ENCODE measurements at regions of chr2 and their contacts with region 1.

Region 1: GRCh38 chr2:65554765-65555591 is 122.6 kb upstream of the SPRED2 start:
- DNase-seq: no peak
- H3K4me3 ChIP-seq: no peak overlapping the region
- H3K27ac ChIP-seq: no peak overlapping the region
- H3K4me1 ChIP-seq: peaks cover 0 to 9% (median 4%) of the 10 kb centered on the region in 4 donors
- H3K27me3 ChIP-seq: no peaks in the 10 kb centered on the region
- CTCF ChIP-seq: no peak
- EP300 ChIP-seq: no peak
- POLR2A ChIP-seq: no peak

Region 2: DNA sequence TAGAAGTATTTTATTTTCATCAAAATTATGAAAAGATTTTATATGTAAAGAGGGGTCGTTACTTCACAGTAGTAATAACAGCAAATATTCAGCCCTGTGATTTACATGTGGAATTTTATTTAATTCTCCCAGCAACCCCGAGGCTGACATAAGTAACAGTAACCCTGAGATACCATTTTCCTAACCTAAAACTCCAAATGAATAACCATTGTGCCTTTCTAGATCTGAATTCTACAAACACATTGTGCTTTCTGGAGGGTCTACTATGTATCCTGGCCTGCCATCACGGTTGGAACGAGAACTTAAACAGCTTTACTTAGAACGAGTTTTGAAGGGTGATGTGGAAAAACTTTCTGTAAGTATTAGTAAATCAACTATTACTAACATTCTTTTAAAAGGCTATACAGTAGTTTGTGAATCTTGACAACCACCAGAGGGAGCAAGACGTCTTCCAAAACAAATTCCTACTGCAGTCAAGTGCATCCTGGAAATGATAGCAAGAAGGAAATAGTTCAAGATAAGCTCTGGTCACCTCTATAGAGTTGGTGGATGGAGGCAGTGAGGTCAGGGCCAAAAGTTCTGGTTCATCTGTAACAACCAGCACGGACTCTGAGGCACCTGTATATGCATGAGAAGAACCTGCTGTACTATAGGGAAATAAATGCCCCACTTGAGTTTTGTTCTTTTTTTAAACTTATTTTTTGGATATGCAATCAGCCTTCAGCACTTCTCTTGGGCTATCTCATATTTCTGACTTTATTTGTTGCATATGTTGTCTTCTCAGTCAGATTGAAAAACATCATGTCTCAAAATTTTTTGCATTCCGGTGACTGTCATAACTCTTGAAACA is 289.9 kb before region 1 on chr2:
- intact Hi-C with region 1: loop called (anchors 5 kb)
- DNase-seq: no peak
- H3K4me3 ChIP-seq: no peak overlapping the region
- H3K27ac ChIP-seq: no peak overlapping the region
- H3K4me1 ChIP-seq: peaks cover 0 to 9% (median 4%) of the 10 kb centered on the region in 4 donors
- H3K27me3 ChIP-seq: no peaks in the 10 kb centered on the region
- CTCF ChIP-seq: peak; percentile 63 to 73 (median 65)
- EP300 ChIP-seq: no peak
- POLR2A ChIP-seq: no peak

Region 3: GRCh38 chr2:65382776-65383357 is 172.1 kb before region 1 on chr2:
- intact Hi-C with region 1: loop called (anchors 10 kb)
- DNase-seq: no peak
- H3K4me3 ChIP-seq: peak overlapping the region; percentile 12 to 37 (median 30)
- H3K27ac ChIP-seq: peak overlapping the region; percentile 50 to 72 (median 60)
- H3K4me1 ChIP-seq: peaks cover 32 to 60% (median 47%) of the 10 kb centered on the region in 4 donors
- H3K27me3 ChIP-seq: no peaks in the 10 kb centered on the region
- CTCF ChIP-seq: peak in 2 of 3 experiments; percentile 11 to 30
- EP300 ChIP-seq: no peak
- POLR2A ChIP-seq: no peak

Measured in esophagus muscularis mucosa (tissue), 4 donors.